HepG2 (cell line): ENCODE measurements at regions of chr3 and their contacts with region 1.

Region 1: DNA sequence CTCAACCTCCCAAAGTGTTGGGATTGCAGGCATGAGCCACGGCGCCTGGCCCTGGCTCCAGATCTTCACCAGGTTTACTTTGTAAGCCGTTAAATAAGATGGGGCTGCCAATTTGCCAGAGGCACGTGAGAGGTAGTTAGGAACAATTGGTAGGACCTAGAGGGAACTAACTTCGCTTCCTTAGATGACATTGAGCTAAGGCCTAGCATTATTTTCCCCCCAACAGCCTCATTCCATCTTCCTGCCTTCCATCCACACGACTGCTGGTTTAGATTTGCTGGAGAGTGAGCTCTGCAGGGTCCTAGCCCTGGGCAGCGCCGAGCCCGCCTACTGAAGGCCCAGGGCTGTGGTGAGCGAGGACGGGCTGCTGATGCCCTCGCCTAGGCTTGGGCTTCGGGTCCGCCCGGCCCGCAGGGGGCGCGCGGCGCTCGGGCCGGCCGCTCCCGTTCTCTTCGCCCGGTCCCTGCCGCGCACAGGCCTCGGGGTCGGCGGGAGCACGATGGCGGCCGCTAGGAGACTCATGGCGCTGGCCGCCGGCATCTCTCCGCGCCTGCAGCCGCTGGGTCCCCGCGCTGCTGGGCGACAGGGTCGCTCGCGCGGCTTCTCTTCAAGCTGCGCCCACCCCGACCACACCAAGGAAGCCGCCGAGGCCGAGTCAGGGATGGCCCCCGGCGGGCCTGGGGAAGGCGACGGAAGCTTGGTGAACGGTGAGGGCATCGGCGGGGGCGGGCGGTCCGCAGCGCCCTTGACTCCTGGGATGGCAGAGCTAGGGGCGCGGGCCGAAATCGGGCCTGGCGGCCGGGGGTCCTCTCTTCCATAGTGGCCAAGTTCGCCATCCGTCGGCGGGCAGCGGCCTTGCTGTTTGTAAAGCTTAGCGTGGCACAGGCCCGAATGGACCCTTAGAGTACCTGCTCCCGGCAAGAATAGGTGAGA is 21.9 kb downstream of the DHX30 start:
- DNase-seq: peak; percentile 69
- ATAC-seq: peak; percentile 99
- H3K4me3 ChIP-seq: peak overlapping the region; percentile 88 to 98 (median 91)
- H3K27ac ChIP-seq: peak overlapping the region; percentile 73
- H3K4me1 ChIP-seq: peaks cover 22% of the 10 kb centered on the region
- H3K27me3 ChIP-seq: no peaks in the 10 kb centered on the region; a peak in 1 of 5 replicates
- CTCF ChIP-seq: peak; percentile 85
- EP300 ChIP-seq: 0 out of 4 replicates have a peak, but pooled peaks have one; percentile 4 to 30
- POLR2A ChIP-seq: peak; percentile 73 to 81
- RAD21 ChIP-seq: peak; percentile 85

Region 2: DNA sequence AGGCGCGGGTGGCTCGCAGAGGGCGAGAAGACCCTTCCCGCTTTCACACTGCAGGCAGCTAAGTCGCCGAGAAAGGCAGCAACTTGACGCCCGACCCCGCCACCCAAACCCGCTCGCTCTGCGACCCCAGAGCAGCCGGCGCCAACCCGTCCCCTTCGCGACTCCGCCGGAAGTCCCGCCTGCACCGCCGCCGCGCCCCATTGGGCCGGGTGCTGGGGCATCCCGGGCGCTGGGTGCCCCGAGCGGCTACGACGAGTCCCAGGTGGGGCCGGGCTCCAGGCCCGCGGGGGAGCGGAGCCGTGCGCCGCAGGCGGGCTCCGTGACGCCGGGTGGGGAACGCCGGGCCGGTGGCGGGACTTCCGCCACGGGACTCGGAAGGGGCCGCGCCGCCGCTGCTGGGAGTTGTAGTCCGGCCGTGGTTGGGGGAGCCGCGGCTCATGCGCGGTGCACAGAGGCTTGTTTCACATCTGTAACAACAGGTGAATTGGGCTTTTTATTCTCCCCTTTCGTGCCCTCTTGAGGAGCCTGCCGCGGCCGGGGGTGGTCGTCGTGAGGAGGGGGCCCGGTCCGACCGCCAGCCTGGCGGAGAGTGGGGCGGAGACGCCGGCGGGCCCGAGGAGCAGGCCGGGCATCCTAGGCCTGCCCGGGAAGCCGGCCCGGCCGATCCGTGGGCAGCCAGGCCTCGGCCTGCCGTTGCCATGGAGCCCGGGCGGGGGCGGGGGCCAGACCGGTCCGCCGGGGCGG is 21.9 kb before region 1 on chr3 and contains the start of gene DHX30:
- CTCF ChIA-PET with region 1: interaction called, 4 read pairs
- POLR2A ChIA-PET with region 1: interaction called, 14 read pairs
- in situ Hi-C with region 1: no loop called
- intact Hi-C with region 1: no loop called
- DNase-seq: peak; percentile 68
- ATAC-seq: peak; percentile 94
- H3K4me3 ChIP-seq: peak within 1 kb of the TSS; percentile 78 to 91 (median 89)
- H3K27ac ChIP-seq: peak within 1 kb of the TSS; percentile 87
- H3K4me1 ChIP-seq: peaks cover 38% of the 10 kb centered on the region
- H3K27me3 ChIP-seq: no peaks in the 10 kb centered on the region
- CTCF ChIP-seq: no peak
- EP300 ChIP-seq: no peak; a peak in 1 of 4 replicates
- POLR2A ChIP-seq: peak; percentile 39 to 64; a peak in 2 of 4 replicates
- RAD21 ChIP-seq: peak; percentile 34
- total RNA-seq, gene DHX30: 45.6 and 59.4 TPM in 2 replicates

Region 3: GRCh38 chr3:47813551-47814177 is 11.1 kb before region 1 on chr3:
- CTCF ChIA-PET with region 1: no interaction called
- POLR2A ChIA-PET with region 1: interaction called, 11 read pairs
- in situ Hi-C with region 1: no loop called
- intact Hi-C with region 1: no loop called
- DNase-seq: no peak
- ATAC-seq: no peak
- H3K4me3 ChIP-seq: no peak overlapping the region
- H3K27ac ChIP-seq: no peak overlapping the region
- H3K4me1 ChIP-seq: no peaks in the 10 kb centered on the region
- H3K27me3 ChIP-seq: no peaks in the 10 kb centered on the region
- CTCF ChIP-seq: no peak
- EP300 ChIP-seq: no peak
- POLR2A ChIP-seq: no peak
- RAD21 ChIP-seq: no peak